AG04450 (cell line): ENCODE measurements at regions of chr2 and their contacts with region 1.

Region 1: GRCh38 chr2:23636426-23636825 is 251.4 kb downstream of the KLHL29 start:
- DNase-seq: no peak
- H3K4me3 ChIP-seq: no peak overlapping the region
- H3K27ac ChIP-seq: peak overlapping the region; percentile 33
- H3K27me3 ChIP-seq: no peaks in the 10 kb centered on the region
- CTCF ChIP-seq: peak; percentile 26

Region 2: GRCh38 chr2:23624378-23624777 is 12.0 kb before region 1 on chr2:
- CTCF ChIA-PET with region 1: interaction called, 15 read pairs
- POLR2A ChIA-PET with region 1: no interaction called
- DNase-seq: no peak
- H3K4me3 ChIP-seq: no peak overlapping the region
- H3K27ac ChIP-seq: no peak overlapping the region
- H3K27me3 ChIP-seq: no peaks in the 10 kb centered on the region
- CTCF ChIP-seq: peak; percentile 57

Region 3: DNA sequence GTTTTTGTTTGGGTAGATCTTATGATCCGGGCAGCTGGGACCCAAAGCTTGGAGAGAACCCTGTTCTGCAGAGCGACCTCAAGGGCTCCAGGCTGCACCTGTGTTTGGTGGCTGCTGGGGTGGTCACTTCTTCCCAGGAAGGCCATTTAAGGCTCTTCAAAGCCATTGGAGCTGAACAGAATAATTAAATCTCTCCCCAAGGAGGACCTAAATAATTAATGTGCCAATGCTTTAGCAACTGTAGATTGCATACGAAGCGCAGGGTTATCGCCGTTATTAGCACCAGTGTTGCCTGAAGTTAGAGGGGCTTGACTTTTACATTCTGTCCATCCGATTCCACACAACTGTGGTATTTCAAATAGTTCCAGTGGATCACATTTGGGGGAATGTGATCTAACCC is 39.1 kb after region 1 on chr2:
- CTCF ChIA-PET with region 1: no interaction called
- POLR2A ChIA-PET with region 1: no interaction called
- DNase-seq: no peak
- H3K4me3 ChIP-seq: no peak overlapping the region
- H3K27ac ChIP-seq: no peak overlapping the region
- H3K27me3 ChIP-seq: no peaks in the 10 kb centered on the region
- CTCF ChIP-seq: no peak